Dorsolateral prefrontal cortex (tissue), 120 donors: ENCODE measurements at regions of chr19 and their contacts with region 1.

Region 1: GRCh38 chr19:1715540-1715939 is 37.8 kb upstream of the ONECUT3 start:
- DNase-seq: no peak
- H3K4me3 ChIP-seq: no peak overlapping the region
- H3K27ac ChIP-seq: no peak overlapping the region
- H3K27me3 ChIP-seq: peaks cover 0 to 62% (median 25%) of the 10 kb centered on the region in 45 donors
- CTCF ChIP-seq: no peak

Region 2: DNA sequence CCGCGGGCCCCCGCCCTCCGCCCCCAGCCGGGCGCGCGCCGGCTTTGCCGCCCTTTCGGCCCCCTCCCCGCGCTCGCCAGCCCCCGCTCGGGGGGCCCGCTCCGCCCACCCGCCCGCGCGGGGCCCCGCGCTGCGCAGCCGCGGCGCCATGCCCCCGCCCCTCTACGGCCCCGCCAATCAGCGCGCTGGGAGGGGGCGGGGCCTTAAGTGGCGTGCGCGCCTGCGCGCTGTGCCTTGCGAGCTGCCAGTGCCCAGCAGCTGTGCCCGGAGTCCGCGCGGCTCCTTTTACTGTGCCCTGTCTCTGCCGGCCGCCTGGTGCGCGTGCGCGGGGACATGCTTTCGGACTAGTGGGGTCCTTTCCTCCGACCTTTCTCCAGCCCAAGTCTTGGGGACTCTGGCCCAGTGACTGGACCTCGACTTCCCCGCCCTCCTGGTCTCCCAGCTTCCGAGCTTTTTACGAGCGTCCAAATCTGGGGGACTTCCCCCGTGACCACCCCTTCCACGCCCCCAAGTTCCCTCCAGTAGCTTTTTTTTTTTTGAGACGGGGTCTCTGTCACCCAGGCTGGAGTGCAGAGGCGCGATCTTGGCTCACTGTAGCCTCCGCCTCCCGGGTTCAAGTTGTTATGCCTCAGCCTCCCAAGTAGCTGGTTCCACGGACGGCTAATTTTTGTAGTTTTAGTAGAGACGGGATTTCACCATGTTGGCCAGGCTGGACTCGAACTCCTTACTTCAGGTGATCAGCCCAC is 122.6 kb before region 1 on chr19 and contains the start of gene MBD3:
- intact Hi-C with region 1: no loop called
- DNase-seq: peak; percentile 89 to 96 (median 94)
- H3K4me3 ChIP-seq: peak within 1 kb of the TSS; percentile 61 to 94 (median 84)
- H3K27ac ChIP-seq: peak within 1 kb of the TSS; percentile 41 to 98 (median 93)
- H3K27me3 ChIP-seq: no peaks in the 10 kb centered on the region
- CTCF ChIP-seq: peak in 25 of 56 donors; percentile 7 to 44 (median 24)
- total RNA-seq, gene MBD3: 59.7 to 192 (median 85.4) TPM

Region 3: GRCh38 chr19:1745589-1746031 is 30.1 kb after region 1 on chr19:
- intact Hi-C with region 1: loop called in 1 of 2 experiments (anchors 2 kb)
- DNase-seq: no peak
- H3K4me3 ChIP-seq: no peak overlapping the region
- H3K27ac ChIP-seq: no peak overlapping the region
- H3K27me3 ChIP-seq: peaks cover 9 to 87% (median 60%) of the 10 kb centered on the region in 45 donors
- CTCF ChIP-seq: no peak

Region 4: GRCh38 chr19:1755467-1756171 is 40.1 kb after region 1 on chr19:
- intact Hi-C with region 1: no loop called
- DNase-seq: no peak
- H3K4me3 ChIP-seq: no peak overlapping the region
- H3K27ac ChIP-seq: no peak overlapping the region
- H3K27me3 ChIP-seq: peaks cover 2 to 91% (median 88%) of the 10 kb centered on the region in 45 donors
- CTCF ChIP-seq: no peak